Posterior vena cava (tissue), 2 donors: ENCODE measurements at regions of chr1 and their contacts with region 1.

Region 1: DNA sequence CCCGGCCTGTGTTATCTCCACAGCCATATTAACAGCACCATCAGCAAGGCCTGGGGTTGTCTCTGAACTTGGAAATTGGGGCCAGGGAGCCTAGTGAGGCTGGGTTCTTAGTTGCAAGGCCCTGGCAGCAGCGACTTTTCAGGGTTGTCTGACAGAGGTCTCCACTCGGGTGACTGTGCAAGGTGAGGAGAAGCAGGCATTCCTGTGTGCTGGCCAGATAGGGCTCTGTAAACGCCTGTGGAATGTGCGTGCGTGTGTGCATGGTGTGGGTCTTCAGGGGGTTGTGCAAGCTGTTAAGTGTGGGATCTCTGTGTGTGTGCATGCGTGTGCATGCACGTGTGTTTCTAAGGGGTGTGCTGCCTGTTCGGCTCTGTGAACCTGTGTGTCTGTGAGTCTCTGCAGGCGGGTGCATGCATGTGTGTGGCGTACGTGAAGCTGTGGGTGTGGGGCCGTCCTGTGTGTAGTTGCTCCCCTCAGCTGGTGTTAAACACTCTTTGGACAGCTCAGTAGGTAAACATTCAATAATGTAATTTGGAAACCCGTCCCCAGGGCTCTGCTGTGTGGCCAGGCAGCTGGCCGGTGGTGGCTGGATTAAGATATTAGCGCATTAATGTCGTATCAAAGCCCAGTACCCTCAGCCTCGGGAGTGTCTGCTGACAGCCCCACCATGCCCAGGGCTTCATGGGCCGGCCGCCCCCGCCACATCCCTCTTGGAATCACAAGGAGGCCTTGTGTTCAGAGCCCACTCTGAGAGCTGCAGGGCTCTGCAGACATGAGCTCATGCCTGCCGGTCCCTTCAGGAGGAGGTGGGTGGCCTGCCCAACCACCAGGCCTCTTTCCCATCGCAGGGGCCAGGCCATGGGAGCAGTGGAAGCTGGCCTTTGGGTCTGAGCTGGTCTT is 189.9 kb downstream of the FOXD2 start:
- DNase-seq: peak; percentile 71

Region 2: GRCh38 chr1:47593598-47594285 is 34.0 kb before region 1 on chr1:
- intact Hi-C with region 1: loop called in 1 of 2 experiments (anchors 1 kb)
- DNase-seq: no peak